Panc1 (cell line): ENCODE measurements at regions of chr6 and their contacts with region 1.

Region 1: DNA sequence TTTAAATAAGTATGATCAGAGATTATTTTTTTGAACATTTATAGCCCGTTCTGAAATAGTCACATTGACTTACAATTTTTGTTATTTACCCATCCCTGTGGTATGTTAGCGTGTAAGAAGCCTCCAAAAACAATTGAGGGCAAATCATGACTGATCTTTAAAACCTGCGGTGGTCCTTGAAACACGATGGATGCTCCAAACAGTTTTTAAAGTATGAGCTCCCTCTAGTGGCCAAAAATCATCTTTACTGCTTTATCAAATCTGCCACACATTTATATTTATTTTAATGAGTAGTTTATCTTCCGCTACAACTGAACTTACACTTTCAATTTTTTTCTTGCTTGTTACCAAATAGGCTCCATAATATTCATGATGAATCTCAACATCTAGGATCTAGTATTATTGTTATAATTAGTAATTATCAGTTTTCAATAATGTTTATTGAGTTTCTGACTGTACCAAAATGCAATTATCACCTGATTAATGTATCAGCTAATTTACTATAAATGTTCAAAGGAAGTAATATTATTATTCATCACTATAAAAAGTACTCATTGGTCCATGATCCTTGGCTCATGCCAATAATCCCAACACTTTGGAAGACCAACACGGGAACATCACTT is 52.2 kb downstream of the MARCKS start:
- DNase-seq: peak; percentile 39
- ATAC-seq: peak; percentile 78
- H3K4me3 ChIP-seq: no peak overlapping the region
- H3K27ac ChIP-seq: no peak overlapping the region
- H3K4me1 ChIP-seq: no peaks in the 10 kb centered on the region
- H3K27me3 ChIP-seq: no peaks in the 10 kb centered on the region
- CTCF ChIP-seq: peak; percentile 83; the same call in 1 of the 2 replicates

Region 2: DNA sequence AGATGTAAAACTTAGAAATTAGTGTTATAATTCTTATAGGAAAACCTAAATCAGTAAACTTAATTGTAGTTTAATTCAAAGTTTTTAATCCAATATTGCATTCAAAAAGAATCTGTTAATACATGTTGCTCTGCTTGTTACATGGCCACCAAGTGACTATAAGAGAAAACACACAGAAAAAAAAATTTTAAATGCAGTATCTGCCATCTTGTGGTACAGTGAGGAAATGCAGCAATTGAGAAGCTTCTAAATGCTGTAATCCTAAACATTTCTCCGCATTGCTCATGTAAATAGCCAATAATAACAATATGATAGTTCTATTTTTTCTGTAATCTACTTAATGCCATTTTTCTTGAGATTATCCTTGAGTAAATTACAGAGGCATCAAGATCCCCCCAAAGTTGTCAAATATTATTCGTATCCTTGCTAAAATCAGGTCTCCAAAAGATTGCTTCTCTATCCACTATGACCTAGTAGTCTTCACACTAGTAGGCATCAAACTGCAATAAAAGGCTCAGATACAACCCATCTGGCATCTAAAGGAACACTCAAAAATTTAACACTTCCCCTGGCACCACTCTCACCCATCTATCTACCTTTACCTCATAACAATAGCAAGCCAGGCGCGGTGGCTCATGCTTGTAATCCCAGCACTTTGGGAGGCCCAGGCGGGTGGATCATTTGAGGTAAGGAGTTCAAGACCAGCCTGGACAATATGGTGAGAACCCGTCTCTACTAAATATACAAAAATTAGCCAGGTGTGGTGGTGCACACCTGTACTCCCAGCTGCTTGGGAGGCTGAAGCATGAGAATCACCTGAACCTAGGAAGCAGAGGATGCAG is 27.0 kb after region 1 on chr6:
- CTCF ChIA-PET with region 1: interaction called, 11 read pairs
- POLR2A ChIA-PET with region 1: no interaction called
- in situ Hi-C with region 1: no loop called
- intact Hi-C with region 1: no loop called
- DNase-seq: peak; percentile 69
- ATAC-seq: peak; percentile 88
- H3K4me3 ChIP-seq: no peak overlapping the region
- H3K27ac ChIP-seq: no peak overlapping the region
- H3K4me1 ChIP-seq: no peaks in the 10 kb centered on the region
- H3K27me3 ChIP-seq: no peaks in the 10 kb centered on the region
- CTCF ChIP-seq: peak; percentile 87

Region 3: DNA sequence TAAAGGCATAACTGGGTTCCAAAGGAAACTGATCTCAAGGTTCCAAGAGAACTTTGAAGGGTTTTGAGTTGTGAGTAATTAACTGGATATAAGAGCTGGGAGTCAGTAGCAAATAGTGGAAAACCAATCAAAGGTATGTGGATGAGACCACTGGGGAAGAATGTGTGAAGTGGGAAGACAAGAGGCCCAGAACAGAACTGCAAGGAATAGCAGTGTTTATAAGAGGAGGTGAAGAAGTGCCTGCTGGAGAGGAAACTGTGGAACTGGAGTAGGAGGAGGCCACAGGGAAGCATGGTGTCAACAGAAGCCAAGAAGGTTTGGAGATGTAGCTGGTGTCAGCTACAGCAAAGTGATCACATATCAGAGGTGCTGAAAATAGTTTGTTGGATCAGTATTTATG is 80.3 kb after region 1 on chr6:
- CTCF ChIA-PET with region 1: no interaction called
- POLR2A ChIA-PET with region 1: no interaction called
- in situ Hi-C with region 1: no loop called
- intact Hi-C with region 1: no loop called
- DNase-seq: no peak
- ATAC-seq: no peak
- H3K4me3 ChIP-seq: no peak overlapping the region
- H3K27ac ChIP-seq: no peak overlapping the region
- H3K4me1 ChIP-seq: 0 out of 2 replicates have a peak, but pooled peaks cover 2% of the 10 kb centered on the region
- H3K27me3 ChIP-seq: no peaks in the 10 kb centered on the region
- CTCF ChIP-seq: no peak

Region 4: GRCh38 chr6:114342826-114343780 is 433.8 kb after region 1 on chr6 and contains the start of gene HS3ST5:
- CTCF ChIA-PET with region 1: no interaction called
- POLR2A ChIA-PET with region 1: no interaction called
- in situ Hi-C with region 1: no loop called
- intact Hi-C with region 1: no loop called
- DNase-seq: no peak
- ATAC-seq: peak; percentile 88
- H3K4me3 ChIP-seq: peak within 1 kb of the TSS; percentile 40 to 51
- H3K27ac ChIP-seq: no peak within 1 kb of the TSS
- H3K4me1 ChIP-seq: peaks cover 5% of the 10 kb centered on the region
- H3K27me3 ChIP-seq: peaks cover 42% of the 10 kb centered on the region
- CTCF ChIP-seq: peak; percentile 77
- total RNA-seq, gene HS3ST5: 0.05 TPM

Region 5: DNA sequence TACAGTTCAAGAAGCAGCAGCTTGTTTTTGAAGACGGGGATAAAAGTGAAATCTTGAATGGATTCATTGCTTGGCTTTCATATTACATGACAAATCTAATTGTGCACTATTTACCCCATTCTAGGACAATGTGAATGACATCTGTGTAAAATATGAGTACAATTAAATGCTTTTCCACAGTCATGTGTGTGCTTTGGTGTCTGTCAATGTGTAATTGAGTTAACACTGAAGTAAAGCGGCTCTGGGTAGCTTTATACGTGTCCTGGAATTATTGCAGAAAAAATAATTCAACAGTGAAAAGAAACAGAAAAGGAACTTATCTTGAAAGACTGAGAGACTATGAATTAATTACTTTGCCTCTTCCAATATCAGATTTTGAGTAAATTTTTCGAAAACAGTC is 667.0 kb after region 1 on chr6:
- CTCF ChIA-PET with region 1: no interaction called
- POLR2A ChIA-PET with region 1: no interaction called
- in situ Hi-C with region 1: no loop called
- intact Hi-C with region 1: no loop called
- DNase-seq: no peak
- ATAC-seq: no peak
- H3K4me3 ChIP-seq: no peak overlapping the region
- H3K27ac ChIP-seq: no peak overlapping the region
- H3K4me1 ChIP-seq: no peaks in the 10 kb centered on the region
- H3K27me3 ChIP-seq: no peaks in the 10 kb centered on the region
- CTCF ChIP-seq: no peak

Region 6: GRCh38 chr6:115830895-115831294 is 1921.5 kb after region 1 on chr6:
- CTCF ChIA-PET with region 1: no interaction called
- POLR2A ChIA-PET with region 1: interaction called, 15 read pairs
- in situ Hi-C with region 1: no loop called
- intact Hi-C with region 1: no loop called
- DNase-seq: no peak
- ATAC-seq: no peak
- H3K4me3 ChIP-seq: no peak overlapping the region
- H3K27ac ChIP-seq: no peak overlapping the region
- H3K4me1 ChIP-seq: no peaks in the 10 kb centered on the region
- H3K27me3 ChIP-seq: no peaks in the 10 kb centered on the region
- CTCF ChIP-seq: no peak